Naive thymus-derived CD8-positive, alpha-beta T cell (primary cell): ENCODE measurements at regions of chr9 and their contacts with region 1.

Region 1: GRCh38 chr9:73151653-73152542 is at the start of gene ANXA1:
- DNase-seq: peak in 6 of 10 donors; percentile 27 to 67 (median 55)
- ATAC-seq: peak; percentile 58 to 69
- H3K4me3 Mint-ChIP-seq: peak within 1 kb of the TSS; percentile 77 to 94 (median 84)
- H3K27ac Mint-ChIP-seq: peak within 1 kb of the TSS; percentile 88 to 99 (median 92)
- H3K4me1 Mint-ChIP-seq: peaks cover 19 to 79% (median 66%) of the 10 kb centered on the region in 4 donors
- H3K27me3 Mint-ChIP-seq: no peaks in the 10 kb centered on the region
- polyA plus RNA-seq, gene ANXA1: 33.9 to 239 (median 59.4) TPM

Region 2: GRCh38 chr9:73132034-73132776 is 19.7 kb before region 1 on chr9:
- POLR2A ChIA-PET with region 1: interaction called, 15 read pairs
- DNase-seq: peak; percentile 43 to 88 (median 79)
- ATAC-seq: peak; percentile 91 to 95
- H3K4me3 Mint-ChIP-seq: peak overlapping the region; percentile 79 to 95 (median 90)
- H3K27ac Mint-ChIP-seq: peak overlapping the region; percentile 85 to 99 (median 97)
- H3K4me1 Mint-ChIP-seq: peaks cover 17 to 34% (median 25%) of the 10 kb centered on the region in 4 donors
- H3K27me3 Mint-ChIP-seq: peaks cover 0 to 1% (median 0%) of the 10 kb centered on the region in 5 donors

Region 3: GRCh38 chr9:74458832-74459231 is 1306.9 kb after region 1 on chr9:
- POLR2A ChIA-PET with region 1: no interaction called
- DNase-seq: no peak
- ATAC-seq: no peak
- H3K4me3 Mint-ChIP-seq: no peak overlapping the region
- H3K27ac Mint-ChIP-seq: no peak overlapping the region
- H3K4me1 Mint-ChIP-seq: no peaks in the 10 kb centered on the region
- H3K27me3 Mint-ChIP-seq: peaks cover 0 to 2% (median 0%) of the 10 kb centered on the region in 5 donors